ENCODE measurements at regions of chr12 and their contacts with region 1.

Region 1: GRCh38 chr12:113005754-113006153 is 27.4 kb downstream of the OAS2 start:
- DNase-seq: no peak
- H3K4me3 ChIP-seq: no peak overlapping the region
- H3K27ac ChIP-seq: no peak overlapping the region
- H3K4me1 ChIP-seq: no peaks in the 10 kb centered on the region
- H3K27me3 ChIP-seq: no peaks in the 10 kb centered on the region
- CTCF ChIP-seq: no peak
- EP300 ChIP-seq: no peak
- POLR2A ChIP-seq: no peak

Region 2: GRCh38 chr12:112906712-112907414 is 98.9 kb before region 1 on chr12 and contains the start of gene OAS1:
- intact Hi-C with region 1: loop called (anchors 10 kb)
- DNase-seq: no peak
- H3K4me3 ChIP-seq: peak within 1 kb of the TSS; percentile 6 to 47 (median 43)
- H3K27ac ChIP-seq: peak within 1 kb of the TSS; percentile 59 to 71 (median 64)
- H3K4me1 ChIP-seq: peaks cover 0 to 26% (median 12%) of the 10 kb centered on the region in 4 donors
- H3K27me3 ChIP-seq: no peaks in the 10 kb centered on the region
- CTCF ChIP-seq: no peak
- EP300 ChIP-seq: no peak
- POLR2A ChIP-seq: peak in 1 of 2 donors; percentile 26
- total RNA-seq, gene OAS1: 8.9 to 18.5 (median 10.4) TPM

Region 3: GRCh38 chr12:113109872-113110599 is 104.3 kb after region 1 on chr12:
- intact Hi-C with region 1: no loop called
- DNase-seq: no peak
- H3K4me3 ChIP-seq: no peak overlapping the region
- H3K27ac ChIP-seq: no peak overlapping the region
- H3K4me1 ChIP-seq: no peaks in the 10 kb centered on the region
- H3K27me3 ChIP-seq: peaks cover 0 to 27% (median 0%) of the 10 kb centered on the region in 3 donors
- CTCF ChIP-seq: no peak
- EP300 ChIP-seq: no peak
- POLR2A ChIP-seq: no peak